ENCODE measurements at regions of chr14 and their contacts with region 1.

Region 1: GRCh38 chr14:103715052-103716000 is at the starts of genes XRCC3 and ZFYVE21:
- DNase-seq: peak; percentile 99 to 100
- H3K4me3 ChIP-seq: peak within 1 kb of the TSS; percentile 94 to 99
- H3K27ac ChIP-seq: peak within 1 kb of the TSS; percentile 77 to 90
- H3K4me1 ChIP-seq: peaks cover 30 to 53% of the 10 kb centered on the region in 2 donors
- H3K27me3 ChIP-seq: no peaks in the 10 kb centered on the region
- CTCF ChIP-seq: no peak
- total RNA-seq, gene XRCC3: 9.0 TPM
- total RNA-seq, gene ZFYVE21: 219 TPM

Region 2: GRCh38 chr14:103562429-103563225 is 152.7 kb before region 1 on chr14 and contains the starts of genes BAG5 and COA8:
- intact Hi-C with region 1: loop called (anchors 5 kb)
- DNase-seq: peak in 1 of 2 donors; percentile 90
- H3K4me3 ChIP-seq: peak within 1 kb of the TSS; percentile 81 to 90
- H3K27ac ChIP-seq: peak within 1 kb of the TSS; percentile 93 to 96
- H3K4me1 ChIP-seq: peaks cover 16 to 46% of the 10 kb centered on the region in 2 donors
- H3K27me3 ChIP-seq: no peaks in the 10 kb centered on the region
- CTCF ChIP-seq: peak in 2 of 3 experiments; percentile 9 to 28
- total RNA-seq, gene BAG5: 7.1 TPM
- total RNA-seq, gene COA8: 37.7 TPM

Region 3: DNA sequence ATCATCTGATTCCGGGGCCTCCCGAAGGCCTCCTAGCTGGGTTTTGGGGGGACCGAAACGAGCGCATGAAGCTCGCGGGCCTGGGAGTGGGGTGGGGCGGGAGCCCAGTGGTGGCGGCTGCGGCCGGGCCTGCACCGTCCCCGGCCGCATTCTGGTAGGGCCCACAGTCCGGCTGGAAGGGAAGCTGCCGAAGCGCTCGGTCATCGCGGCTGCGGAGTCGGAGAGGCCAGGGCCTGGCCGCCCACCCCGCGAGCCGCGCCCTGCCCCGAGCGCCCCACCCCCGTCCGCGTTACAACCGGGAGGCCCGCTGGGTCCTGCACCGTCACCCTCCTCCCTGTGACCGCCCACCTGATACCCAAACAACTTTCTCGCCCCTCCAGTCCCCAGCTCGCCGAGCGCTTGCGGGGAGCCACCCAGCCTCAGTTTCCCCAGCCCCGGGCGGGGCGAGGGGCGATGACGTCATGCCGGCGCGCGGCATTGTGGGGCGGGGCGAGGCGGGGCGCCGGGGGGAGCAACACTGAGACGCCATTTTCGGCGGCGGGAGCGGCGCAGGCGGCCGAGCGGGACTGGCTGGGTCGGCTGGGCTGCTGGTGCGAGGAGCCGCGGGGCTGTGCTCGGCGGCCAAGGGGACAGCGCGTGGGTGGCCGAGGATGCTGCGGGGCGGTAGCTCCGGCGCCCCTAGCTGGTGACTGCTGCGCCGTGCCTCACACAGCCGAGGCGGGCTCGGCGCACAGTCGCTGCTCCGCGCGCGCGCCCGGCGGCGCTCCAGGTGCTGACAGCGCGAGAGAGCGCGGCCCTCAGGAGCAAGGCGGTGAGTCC is 86.4 kb before region 1 on chr14 and contains the start of gene KLC1:
- intact Hi-C with region 1: loop called (anchors 5 kb)
- DNase-seq: peak in 1 of 2 donors; percentile 88
- H3K4me3 ChIP-seq: peak within 1 kb of the TSS; percentile 78 to 80
- H3K27ac ChIP-seq: peak within 1 kb of the TSS; percentile 96 to 99
- H3K4me1 ChIP-seq: peaks cover 20 to 33% of the 10 kb centered on the region in 2 donors
- H3K27me3 ChIP-seq: no peaks in the 10 kb centered on the region
- CTCF ChIP-seq: no peak
- total RNA-seq, gene KLC1: 302 TPM

Region 4: DNA sequence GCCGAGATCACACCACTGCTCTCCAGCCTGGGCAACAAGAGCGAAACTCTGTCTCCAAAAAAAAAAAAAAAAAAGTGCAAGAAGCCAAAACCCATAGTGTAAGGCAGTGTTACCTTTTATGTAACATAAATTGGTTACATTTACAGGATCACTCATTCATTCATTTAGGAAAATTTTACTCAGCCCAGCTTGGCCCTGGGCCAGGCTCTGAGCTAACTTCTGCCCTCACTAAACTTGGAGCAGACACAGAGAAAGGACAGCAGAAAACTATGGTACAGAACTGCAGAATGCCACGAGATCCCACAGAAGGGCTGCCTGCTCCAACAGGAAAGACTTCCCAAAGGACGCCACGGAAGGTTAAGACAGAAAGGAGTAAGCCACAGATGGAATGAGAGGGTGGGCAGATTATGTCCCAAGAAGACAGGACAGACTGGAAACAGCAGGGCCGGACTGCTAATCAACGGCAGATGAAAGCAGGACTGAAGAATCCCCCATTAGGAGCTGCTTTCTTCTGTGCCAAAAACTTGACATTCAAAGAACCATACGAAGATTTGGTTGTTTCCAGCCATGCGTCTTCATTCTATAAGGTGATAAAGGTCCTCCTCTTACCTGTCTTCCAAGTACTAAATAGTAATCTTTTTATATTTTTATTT is 113.1 kb after region 1 on chr14:
- intact Hi-C with region 1: no loop called
- DNase-seq: peak in 1 of 2 donors; percentile 66
- H3K4me3 ChIP-seq: no peak overlapping the region
- H3K27ac ChIP-seq: no peak overlapping the region
- H3K4me1 ChIP-seq: no peaks in the 10 kb centered on the region
- H3K27me3 ChIP-seq: no peaks in the 10 kb centered on the region
- CTCF ChIP-seq: no peak

Region 5: DNA sequence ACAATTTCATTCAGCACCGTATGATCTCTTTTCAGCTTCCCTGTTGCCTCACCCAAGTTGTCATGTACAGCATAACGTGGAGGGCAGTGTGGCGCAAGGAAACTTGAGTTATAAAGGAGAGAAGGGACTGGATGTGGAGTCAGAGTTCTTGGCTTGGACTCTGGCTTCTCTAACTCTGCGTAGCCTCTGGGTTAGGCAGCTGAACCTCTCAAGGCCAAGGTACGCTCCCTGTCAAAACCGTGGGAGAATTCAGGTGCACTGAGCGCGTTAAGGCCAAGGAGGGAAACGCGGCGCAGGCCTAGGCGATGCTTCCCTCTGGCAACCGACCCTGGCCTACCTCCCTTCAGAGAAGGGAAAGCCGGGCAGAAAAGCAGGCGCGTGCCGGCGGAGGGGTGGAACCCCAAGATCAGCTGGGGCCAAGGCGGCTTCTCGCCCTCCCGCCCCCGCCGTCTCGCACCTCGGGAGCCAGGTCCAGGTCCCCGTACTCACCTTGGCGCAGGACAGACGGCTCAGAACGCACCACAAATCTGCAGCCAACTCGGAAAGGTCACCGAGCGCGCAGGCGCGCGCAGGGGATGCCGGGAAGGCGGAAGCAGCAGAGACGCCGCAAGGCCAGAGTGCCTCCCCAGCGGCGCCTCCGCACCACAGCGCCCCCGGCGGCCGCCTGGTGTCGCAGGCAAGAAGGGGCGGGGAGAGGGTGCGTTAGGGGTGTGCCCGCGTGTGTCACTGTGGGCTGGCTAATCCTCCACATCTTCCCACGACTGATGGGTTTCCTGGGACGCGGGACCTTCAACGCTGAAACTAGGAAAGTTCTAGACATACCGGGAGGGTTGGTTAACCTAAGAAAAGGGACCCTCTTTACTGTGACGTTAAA is 205.9 kb after region 1 on chr14:
- intact Hi-C with region 1: loop called (anchors 5 kb)
- DNase-seq: peak; percentile 67 to 94
- H3K4me3 ChIP-seq: peak overlapping the region; percentile 65 to 84
- H3K27ac ChIP-seq: peak overlapping the region; percentile 58 to 59
- H3K4me1 ChIP-seq: peaks cover 6 to 7% of the 10 kb centered on the region in 2 donors
- H3K27me3 ChIP-seq: no peaks in the 10 kb centered on the region
- CTCF ChIP-seq: peak; percentile 97 to 98 (median 97)

Region 6: DNA sequence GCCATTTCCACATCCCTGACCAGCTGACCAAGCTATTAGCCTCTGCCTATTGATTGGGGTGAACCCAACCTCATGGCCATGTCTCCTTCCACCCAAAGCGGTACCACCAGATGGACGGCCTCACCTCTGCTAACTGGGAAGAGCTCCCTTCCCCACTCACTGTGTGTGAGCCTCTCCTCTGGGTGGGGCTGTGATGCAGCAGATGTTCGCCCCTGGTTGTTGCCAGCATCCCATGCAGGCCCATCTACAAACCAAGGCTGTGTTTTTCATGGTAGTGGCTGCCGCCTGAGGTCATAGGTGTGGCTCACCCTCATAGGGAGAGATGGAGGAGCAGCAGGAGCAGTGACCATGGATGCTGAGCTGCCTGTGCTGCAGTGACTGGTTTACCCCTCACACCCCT is 274.6 kb after region 1 on chr14:
- intact Hi-C with region 1: no loop called
- DNase-seq: no peak
- H3K4me3 ChIP-seq: no peak overlapping the region
- H3K27ac ChIP-seq: no peak overlapping the region
- H3K4me1 ChIP-seq: no peaks in the 10 kb centered on the region
- H3K27me3 ChIP-seq: no peaks in the 10 kb centered on the region
- CTCF ChIP-seq: no peak